ENCODE measurements at regions of chr22 and their contacts with region 1.

Region 1: GRCh38 chr22:36028646-36029405 is at the start of gene RBFOX2:
- DNase-seq: peak; percentile 98
- total RNA-seq, gene RBFOX2: 114 to 124 TPM

Region 2: DNA sequence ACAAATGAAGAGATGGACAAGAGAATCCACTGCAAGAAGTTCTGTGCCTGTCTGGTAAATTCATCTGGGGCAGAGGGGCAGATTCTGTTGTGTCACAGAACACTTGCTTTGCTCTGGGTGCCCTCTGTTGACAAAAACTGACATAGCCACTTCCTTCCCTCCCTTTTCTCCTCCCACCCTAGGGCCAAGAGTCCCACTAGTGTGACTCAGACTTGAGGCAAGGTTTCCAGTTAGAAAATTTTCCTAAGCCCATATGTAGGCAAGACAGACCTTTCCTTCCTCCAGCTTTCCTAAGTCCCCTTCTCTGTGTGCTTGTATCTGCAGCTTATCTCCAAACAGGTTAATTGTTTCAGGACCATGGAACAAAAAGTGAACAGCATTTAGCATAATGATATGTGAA is 107.0 kb before region 1 on chr22:
- intact Hi-C with region 1: no loop called
- DNase-seq: no peak

Region 3: GRCh38 chr22:35961480-35962295 is 67.1 kb before region 1 on chr22:
- intact Hi-C with region 1: loop called in 1 of 2 experiments (anchors 5 kb)
- DNase-seq: no peak

Region 4: DNA sequence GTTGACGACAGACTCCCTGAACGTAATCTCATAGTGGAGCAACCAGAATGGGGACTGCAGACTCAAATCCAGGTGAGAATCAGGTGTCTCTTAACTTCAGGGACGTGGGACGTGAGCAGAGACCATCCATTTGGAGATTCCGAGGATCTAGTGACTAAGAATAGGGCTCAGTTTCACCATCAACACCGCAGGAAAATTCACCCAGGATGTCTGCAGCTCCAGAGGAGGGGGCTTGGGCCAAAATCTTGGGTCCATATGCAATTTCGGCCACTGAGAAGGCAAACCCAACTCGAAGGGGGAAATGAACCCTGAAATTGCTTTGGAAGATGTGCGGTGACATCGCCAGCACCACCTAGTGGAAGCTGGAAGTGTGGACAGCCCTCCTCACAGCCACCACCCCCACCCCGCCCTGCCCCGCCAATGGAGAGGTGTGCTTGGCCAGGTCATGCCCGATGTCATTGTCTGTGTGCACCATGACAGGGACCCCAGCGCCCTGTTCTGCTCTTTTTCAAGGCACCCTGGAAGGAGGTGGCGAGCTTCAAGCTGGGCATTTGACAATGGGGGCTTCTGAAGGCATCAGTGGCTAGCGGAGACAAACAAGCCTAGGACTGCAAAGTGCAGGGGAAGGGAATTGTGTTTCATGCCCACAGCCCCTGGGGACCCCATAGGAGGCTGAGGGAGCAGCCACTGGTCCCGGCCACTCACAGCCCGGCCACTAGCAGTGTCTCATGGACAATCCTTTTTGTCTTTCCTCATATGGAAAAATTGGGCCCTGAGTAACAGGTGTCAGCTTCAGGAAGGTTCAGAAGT is 248.9 kb after region 1 on chr22:
- intact Hi-C with region 1: no loop called
- DNase-seq: peak; percentile 82

Measured in posterior vena cava (tissue), 2 donors.